B cell (primary cell): ENCODE measurements at regions of chr7 and their contacts with region 1.

Region 1: GRCh38 chr7:114922016-114922651 is at the start of gene MDFIC:
- DNase-seq: no peak
- ATAC-seq: peak; percentile 62
- H3K4me3 ChIP-seq: peak within 1 kb of the TSS; percentile 57 to 90 (median 88)
- H3K4me3 Mint-ChIP-seq: peak within 1 kb of the TSS; percentile 99
- H3K27ac ChIP-seq: peak within 1 kb of the TSS; percentile 82 to 91
- H3K27ac Mint-ChIP-seq: peak within 1 kb of the TSS; percentile 98
- H3K4me1 ChIP-seq: peaks cover 33 to 36% of the 10 kb centered on the region in 2 donors
- H3K4me1 Mint-ChIP-seq: peaks cover 70% of the 10 kb centered on the region
- H3K27me3 ChIP-seq: no peaks in the 10 kb centered on the region
- H3K27me3 Mint-ChIP-seq: no peaks in the 10 kb centered on the region
- CTCF ChIP-seq: no peak
- total RNA-seq, gene MDFIC: 56.0 and 66.1 TPM in 2 replicates

Region 2: DNA sequence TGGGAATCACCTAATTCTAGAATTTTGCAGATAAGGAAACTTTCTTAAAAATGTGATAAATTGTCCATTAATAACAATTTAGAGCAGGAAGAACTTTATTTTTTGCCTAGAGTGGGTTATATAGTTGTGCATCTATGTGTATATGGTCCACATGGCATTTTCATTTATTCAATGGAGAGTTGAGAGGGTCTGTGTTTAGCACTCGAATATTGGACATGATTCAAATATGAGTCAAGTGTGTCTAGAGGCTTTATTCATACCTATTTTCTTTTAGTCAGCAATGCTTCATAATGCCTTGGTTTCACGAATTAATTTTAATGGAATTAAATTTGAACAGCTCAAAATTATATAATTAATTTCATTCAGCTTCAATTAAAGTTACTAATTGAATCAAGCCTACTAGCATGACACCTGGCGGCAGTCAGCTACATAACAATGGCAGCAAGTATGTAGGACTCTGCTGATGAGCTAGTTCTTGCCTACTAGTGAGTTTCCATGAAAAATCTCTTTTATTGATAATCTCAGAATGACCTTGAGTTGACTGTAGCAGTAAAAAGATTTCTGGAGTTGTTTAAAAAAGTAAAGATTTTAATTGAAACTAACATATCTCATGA is 17.5 kb after region 1 on chr7:
- CTCF ChIA-PET with region 1: interaction called, 24 read pairs
- POLR2A ChIA-PET with region 1: no interaction called
- intact Hi-C with region 1: no loop called
- DNase-seq: no peak
- ATAC-seq: no peak
- H3K4me3 ChIP-seq: no peak overlapping the region
- H3K4me3 Mint-ChIP-seq: no peak overlapping the region
- H3K27ac ChIP-seq: no peak overlapping the region
- H3K27ac Mint-ChIP-seq: no peak overlapping the region
- H3K4me1 ChIP-seq: peaks cover 17 to 28% of the 10 kb centered on the region in 2 donors
- H3K4me1 Mint-ChIP-seq: peaks cover 48% of the 10 kb centered on the region
- H3K27me3 ChIP-seq: no peaks in the 10 kb centered on the region
- H3K27me3 Mint-ChIP-seq: no peaks in the 10 kb centered on the region
- CTCF ChIP-seq: peak; percentile 51

Region 3: DNA sequence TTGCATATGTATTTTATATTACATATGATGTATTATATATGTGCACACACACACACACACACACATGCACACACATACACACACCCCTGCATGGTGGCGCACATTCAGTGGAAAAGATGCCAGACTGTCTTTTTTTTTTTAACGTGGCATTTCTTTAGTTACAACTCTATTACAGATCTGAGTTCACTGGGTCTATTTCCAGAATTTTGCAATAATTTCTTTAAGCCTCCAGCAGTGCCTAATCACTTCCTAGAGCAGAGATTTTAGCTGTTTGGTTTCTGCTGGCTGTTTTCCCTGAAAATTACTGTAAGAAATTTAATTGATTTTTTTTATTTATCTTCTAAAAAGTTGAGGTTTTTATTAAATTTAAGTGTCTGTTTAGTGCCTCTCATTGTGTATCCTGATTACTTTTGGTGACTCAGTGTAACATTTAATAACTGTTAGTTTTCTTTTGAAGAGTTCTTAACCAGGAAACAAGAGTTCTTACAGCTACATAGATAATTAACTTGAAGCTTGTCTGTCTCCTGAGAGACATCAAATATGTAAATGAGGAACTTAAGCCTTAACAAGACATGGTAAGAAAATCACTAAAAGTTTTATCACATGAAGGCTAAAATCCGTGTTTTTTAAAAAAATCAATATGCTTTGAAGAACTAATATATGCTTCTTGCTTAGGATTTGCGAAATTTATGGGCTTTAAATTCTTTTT is 231.8 kb after region 1 on chr7:
- CTCF ChIA-PET with region 1: no interaction called
- POLR2A ChIA-PET with region 1: no interaction called
- intact Hi-C with region 1: no loop called
- DNase-seq: no peak
- ATAC-seq: no peak
- H3K4me3 ChIP-seq: no peak overlapping the region
- H3K4me3 Mint-ChIP-seq: no peak overlapping the region
- H3K27ac ChIP-seq: no peak overlapping the region
- H3K27ac Mint-ChIP-seq: no peak overlapping the region
- H3K4me1 ChIP-seq: no peaks in the 10 kb centered on the region
- H3K4me1 Mint-ChIP-seq: no peaks in the 10 kb centered on the region
- H3K27me3 ChIP-seq: no peaks in the 10 kb centered on the region
- H3K27me3 Mint-ChIP-seq: no peaks in the 10 kb centered on the region
- CTCF ChIP-seq: no peak